ENCODE measurements at regions of chr1 and their contacts with region 1.

Region 1: DNA sequence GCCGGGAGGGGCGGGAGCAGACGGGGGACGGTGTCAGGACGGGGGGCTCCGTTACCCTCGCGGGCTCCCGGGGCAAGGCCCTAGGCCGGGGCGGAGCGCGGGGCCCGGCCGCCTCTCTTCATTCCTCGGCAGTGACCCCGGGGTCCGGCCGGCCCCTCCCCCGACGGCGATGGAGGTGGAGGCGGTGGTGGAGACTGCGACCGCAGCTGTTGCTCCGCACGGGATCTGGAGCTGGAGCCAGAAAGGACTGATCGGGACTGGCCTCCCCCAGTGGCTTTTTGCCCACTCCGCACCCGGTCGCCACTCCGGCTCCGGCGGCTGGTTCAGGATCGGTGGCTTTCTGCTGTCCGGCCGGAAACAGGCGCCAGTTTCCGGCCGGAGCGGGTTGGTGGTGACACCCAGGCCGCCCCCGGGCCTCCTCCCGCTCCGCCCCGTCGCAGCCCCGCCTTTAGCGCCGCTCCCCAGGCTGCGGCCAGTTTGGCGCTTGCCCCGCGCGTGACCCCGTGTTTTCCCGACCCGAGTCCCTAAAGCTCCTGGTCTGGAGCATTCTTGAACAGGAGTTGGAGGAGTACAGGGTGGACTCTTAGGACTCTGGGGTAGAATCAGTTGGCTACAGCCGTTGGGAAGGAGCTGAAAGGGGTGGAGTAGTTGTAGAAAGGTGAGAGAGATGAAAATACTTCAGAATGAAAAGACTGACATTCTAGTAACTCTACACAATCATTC is at the start of gene OTUD7B:
- DNase-seq: peak; percentile 69
- H3K4me3 Mint-ChIP-seq: peak within 1 kb of the TSS; percentile 97
- H3K27ac Mint-ChIP-seq: peak within 1 kb of the TSS; percentile 97
- H3K4me1 Mint-ChIP-seq: peaks cover 38% of the 10 kb centered on the region
- H3K27me3 Mint-ChIP-seq: no peaks in the 10 kb centered on the region
- total RNA-seq, gene OTUD7B: 26.1 and 28.2 TPM in 2 replicates

Region 2: GRCh38 chr1:149927503-149928387 is 82.8 kb before region 1 on chr1 and contains the start of gene SF3B4:
- intact Hi-C with region 1: loop called (anchors 5 kb)
- DNase-seq: peak; percentile 95
- H3K4me3 Mint-ChIP-seq: peak within 1 kb of the TSS; percentile 100
- H3K27ac Mint-ChIP-seq: peak within 1 kb of the TSS; percentile 95
- H3K4me1 Mint-ChIP-seq: peaks cover 41% of the 10 kb centered on the region
- H3K27me3 Mint-ChIP-seq: no peaks in the 10 kb centered on the region
- total RNA-seq, gene SF3B4: 109 and 113 TPM in 2 replicates

Region 3: DNA sequence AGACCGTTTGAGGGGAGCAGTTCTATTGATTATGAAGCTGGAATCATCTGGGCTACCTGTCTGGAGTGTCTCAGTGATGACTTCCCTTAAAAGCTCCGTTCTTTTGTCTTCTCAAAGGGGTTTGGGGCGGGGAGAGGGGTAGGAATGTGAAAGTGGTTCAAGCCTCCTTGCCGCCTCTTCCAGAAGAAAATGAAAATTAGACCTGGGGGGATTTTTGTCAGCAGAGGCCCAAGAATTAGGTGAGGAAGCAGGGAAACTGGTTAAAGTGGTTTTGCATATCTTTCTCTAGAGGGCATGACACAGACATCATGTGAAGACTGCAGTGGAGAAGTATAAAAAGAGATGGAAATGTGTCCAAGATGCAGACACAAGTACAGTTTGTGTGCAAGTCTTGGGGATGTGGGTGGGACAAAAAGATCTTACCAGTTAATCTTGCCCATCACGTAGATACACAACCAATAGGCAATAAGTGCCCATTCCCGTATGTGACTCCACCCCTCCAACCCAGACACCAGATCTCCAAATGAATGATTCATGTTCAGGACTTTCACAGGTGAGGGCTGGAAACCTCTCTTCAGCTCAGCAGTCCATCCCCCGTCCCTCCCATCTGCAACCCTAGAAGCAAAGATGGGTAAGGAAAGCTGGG is 73.4 kb before region 1 on chr1:
- intact Hi-C with region 1: loop called (anchors 5 kb)
- DNase-seq: no peak
- H3K4me3 Mint-ChIP-seq: peak overlapping the region; percentile 11
- H3K27ac Mint-ChIP-seq: peak overlapping the region; percentile 42
- H3K4me1 Mint-ChIP-seq: peaks cover 22% of the 10 kb centered on the region
- H3K27me3 Mint-ChIP-seq: no peaks in the 10 kb centered on the region

Region 4: GRCh38 chr1:149949911-149950310 is 60.6 kb before region 1 on chr1:
- intact Hi-C with region 1: no loop called
- DNase-seq: no peak
- H3K4me3 Mint-ChIP-seq: no peak overlapping the region
- H3K27ac Mint-ChIP-seq: no peak overlapping the region
- H3K4me1 Mint-ChIP-seq: no peaks in the 10 kb centered on the region
- H3K27me3 Mint-ChIP-seq: no peaks in the 10 kb centered on the region

Region 5: DNA sequence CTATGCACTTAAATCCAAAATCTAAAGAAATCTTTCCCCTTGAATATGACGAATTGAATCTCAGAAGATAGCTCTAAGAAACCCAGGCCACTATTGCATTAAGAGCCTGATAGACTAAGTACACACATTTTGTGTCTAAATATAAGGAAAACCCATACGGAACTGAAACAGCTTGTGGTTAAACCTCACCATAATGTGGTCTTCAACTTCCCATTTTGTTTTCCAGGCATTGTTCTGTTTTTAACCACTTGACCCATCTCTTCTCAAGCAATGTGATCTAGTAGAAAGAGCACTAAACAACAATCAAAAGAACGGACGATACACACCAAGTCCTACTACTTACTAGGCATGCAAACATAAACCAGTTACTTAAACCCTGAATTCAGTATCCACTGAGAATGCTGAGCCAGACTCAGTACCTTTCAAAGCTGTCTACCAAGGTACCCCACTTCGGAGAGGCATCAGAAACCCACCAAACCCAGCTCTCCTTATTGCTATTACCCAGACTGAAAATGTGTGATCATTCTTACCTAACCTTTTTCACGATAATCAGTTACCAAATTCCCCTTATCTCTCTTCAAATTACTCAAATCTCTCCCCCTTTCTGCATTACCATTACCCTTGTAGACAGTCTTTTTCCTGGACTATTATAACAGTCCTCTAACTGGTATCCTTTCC is 12.8 kb before region 1 on chr1:
- intact Hi-C with region 1: loop called (anchors 1 kb)
- DNase-seq: no peak
- H3K4me3 Mint-ChIP-seq: no peak overlapping the region
- H3K27ac Mint-ChIP-seq: peak overlapping the region; percentile 45
- H3K4me1 Mint-ChIP-seq: peaks cover 54% of the 10 kb centered on the region
- H3K27me3 Mint-ChIP-seq: peaks cover 2% of the 10 kb centered on the region

Region 6: DNA sequence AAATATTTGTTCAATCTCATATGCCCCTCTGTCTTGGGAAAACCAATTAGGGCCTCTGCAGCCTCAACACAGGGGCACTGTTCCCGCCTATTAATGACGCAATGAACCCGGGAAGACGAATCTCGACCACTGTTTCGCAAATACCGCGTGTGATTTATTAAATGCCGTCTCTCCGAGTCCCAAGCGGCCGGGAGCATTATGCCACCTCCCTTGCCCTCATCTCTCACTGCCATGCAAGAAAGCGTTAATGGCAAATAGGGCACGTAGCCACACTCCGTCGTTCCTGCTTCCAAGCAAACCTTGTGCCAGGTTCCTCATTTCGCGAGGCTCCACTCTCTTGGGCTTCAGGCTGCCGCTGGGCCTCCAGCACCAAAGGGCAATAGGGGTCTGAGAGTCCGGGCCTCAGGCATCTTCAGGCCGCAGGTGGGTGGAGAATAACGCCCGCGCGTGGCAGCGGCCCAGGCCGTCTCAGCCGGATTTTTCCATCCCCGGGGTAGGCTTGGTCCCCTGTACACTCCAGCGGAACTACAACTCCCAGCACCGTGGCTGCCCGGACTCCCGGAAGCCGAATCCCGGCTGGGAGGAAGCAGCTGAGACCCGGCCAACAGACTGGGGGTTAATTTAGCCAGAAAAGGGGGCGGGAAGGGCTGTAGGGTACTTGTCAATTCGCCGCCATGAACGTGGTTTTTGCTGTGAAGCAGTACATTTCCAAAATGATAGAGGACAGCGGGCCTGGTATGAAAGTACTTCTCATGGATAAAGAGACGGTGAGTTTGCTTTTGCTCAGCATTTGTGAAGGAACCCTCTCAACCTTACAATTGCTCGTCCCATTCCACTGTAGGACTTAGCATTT is 56.9 kb after region 1 on chr1 and contains the start of gene VPS45:
- intact Hi-C with region 1: loop called (anchors 2 kb)
- DNase-seq: peak; percentile 80
- H3K4me3 Mint-ChIP-seq: peak within 1 kb of the TSS; percentile 94
- H3K27ac Mint-ChIP-seq: peak within 1 kb of the TSS; percentile 97
- H3K4me1 Mint-ChIP-seq: peaks cover 31% of the 10 kb centered on the region
- H3K27me3 Mint-ChIP-seq: peaks cover 1% of the 10 kb centered on the region
- total RNA-seq, gene VPS45: 21.9 TPM in 2 replicates